Activated CD4-positive, alpha-beta T cell treated with anti-CD3 and anti-CD28 coated beads for 36 hours (primary cell): ENCODE measurements at regions of chr2 and their contacts with region 1.

Region 1: GRCh38 chr2:207529330-207530159 is at the start of gene CREB1:
- DNase-seq: peak; percentile 100
- ATAC-seq: peak; percentile 89
- H3K4me3 Mint-ChIP-seq: peak within 1 kb of the TSS; percentile 98
- H3K27ac Mint-ChIP-seq: peak within 1 kb of the TSS; percentile 100
- H3K4me1 Mint-ChIP-seq: peaks cover 57% of the 10 kb centered on the region
- H3K27me3 Mint-ChIP-seq: no peaks in the 10 kb centered on the region
- total RNA-seq, gene CREB1: 85.4 to 136 TPM

Region 2: DNA sequence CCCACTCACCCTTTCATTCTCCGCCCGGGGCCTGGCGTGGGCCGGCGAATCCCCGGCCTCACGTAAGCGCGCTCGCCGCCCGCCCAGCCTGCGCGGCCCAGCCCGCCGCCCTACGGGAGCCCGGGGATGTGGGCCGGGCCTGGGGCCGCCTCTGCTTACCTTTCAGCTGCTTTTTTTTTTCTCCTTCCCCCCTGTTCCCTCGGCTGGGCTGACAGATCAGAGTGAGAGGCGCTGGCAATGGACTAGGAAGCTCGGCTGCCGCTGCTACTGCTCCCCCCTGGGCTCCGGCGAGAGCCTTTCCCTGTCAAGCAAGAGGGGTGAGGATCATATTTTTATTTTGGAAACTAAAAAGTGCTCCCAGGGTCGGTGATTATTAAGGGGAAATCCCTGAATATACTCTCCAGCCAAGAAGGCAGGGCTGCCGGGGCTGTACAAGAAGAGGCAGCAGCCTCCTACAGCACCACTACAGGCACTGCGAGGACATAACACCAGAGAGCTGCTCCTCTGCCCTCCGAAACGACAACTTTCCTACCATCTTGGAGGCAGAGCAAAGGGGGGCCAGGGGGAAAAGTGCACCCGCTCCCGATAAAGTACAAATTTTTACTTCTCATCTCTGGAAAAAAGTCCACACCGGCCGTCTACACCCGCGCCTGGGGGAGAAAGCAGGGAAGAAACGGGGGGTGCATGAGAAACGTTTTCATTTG is 1443.7 kb before region 1 on chr2 and contains the start of gene INO80D:
- CTCF ChIA-PET with region 1: no interaction called
- POLR2A ChIA-PET with region 1: no interaction called
- intact Hi-C with region 1: loop called in 1 of 2 experiments (anchors 5 kb)
- DNase-seq: peak; percentile 89
- ATAC-seq: peak; percentile 96
- H3K4me3 Mint-ChIP-seq: peak within 1 kb of the TSS; percentile 96
- H3K27ac Mint-ChIP-seq: peak within 1 kb of the TSS; percentile 99
- H3K4me1 Mint-ChIP-seq: peaks cover 28% of the 10 kb centered on the region
- H3K27me3 Mint-ChIP-seq: no peaks in the 10 kb centered on the region
- total RNA-seq, gene INO80D: 17.6 to 18.9 TPM

Region 3: DNA sequence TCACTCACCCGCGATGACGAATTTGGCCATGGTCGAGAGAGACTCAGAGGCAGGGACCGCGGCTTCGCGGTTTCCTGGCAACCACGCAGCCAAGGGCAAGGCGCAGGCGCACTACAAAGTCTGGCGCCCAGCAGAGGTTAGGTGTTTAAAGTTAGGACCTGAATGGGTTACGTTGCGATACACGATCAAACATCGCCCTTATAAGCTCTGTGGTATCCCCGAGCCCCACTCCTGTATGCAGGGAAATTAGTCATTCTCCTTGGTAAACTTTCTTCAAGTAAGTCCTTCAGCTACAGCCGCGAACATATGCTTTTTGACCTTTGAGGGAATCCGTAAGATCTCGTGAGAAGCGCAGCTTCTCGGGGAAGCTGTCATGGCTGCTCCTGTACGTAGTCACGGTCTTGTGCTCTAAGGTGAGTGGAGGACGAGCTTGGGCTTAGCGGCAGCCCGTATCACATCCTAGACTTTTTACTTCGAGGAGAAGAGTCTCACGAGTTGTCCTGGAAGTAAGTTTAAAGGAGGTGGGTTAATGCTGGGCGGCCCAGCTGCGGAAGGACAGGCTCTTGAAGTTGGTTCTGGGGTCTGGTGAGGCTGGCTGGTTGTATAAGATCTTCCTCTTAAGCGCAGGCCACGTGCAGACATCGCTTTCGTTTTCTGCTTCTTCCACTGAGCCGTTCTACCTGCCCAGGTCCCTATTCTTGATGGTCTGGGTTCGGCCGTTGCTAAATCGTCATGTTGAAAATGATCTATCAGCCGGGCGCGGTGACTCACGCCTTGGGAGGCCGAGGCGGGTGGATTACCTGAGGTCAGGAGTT is 764.1 kb before region 1 on chr2 and contains the starts of genes FASTKD2 and MDH1B:
- CTCF ChIA-PET with region 1: no interaction called
- POLR2A ChIA-PET with region 1: interaction called, 3 read pairs
- intact Hi-C with region 1: loop called in 1 of 2 experiments (anchors 1 kb)
- DNase-seq: peak; percentile 93
- ATAC-seq: peak; percentile 87
- H3K4me3 Mint-ChIP-seq: peak within 1 kb of the TSS; percentile 93
- H3K27ac Mint-ChIP-seq: peak within 1 kb of the TSS; percentile 98
- H3K4me1 Mint-ChIP-seq: peaks cover 37% of the 10 kb centered on the region
- H3K27me3 Mint-ChIP-seq: no peaks in the 10 kb centered on the region
- total RNA-seq, gene FASTKD2: 33.9 to 37.0 TPM
- total RNA-seq, gene MDH1B: 0.83 to 1.3 TPM

Region 4: DNA sequence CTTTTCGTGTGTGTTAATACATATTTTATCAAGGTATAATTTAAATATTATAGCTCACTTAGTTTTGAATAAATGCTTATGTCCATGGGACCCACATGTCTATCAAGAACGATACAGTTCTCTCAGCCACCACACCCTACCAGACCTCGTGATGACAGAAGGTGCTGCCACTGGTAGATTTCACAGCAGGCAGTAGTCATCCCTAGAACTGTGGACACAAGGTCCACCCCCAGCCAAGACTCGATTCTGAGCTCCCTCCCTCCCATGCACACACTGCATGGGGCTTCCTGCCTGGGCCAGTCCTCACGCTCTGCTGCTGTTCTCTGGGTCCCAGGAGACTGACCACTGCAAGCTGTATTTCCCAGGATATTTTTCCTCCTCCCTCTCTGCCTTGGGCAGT is 26.3 kb before region 1 on chr2:
- CTCF ChIA-PET with region 1: interaction called, 5 read pairs
- POLR2A ChIA-PET with region 1: interaction called, 27 read pairs
- intact Hi-C with region 1: loop called (anchors 1 kb)
- DNase-seq: peak; percentile 28
- ATAC-seq: no peak
- H3K4me3 Mint-ChIP-seq: no peak overlapping the region
- H3K27ac Mint-ChIP-seq: no peak overlapping the region
- H3K4me1 Mint-ChIP-seq: peaks cover 57% of the 10 kb centered on the region
- H3K27me3 Mint-ChIP-seq: no peaks in the 10 kb centered on the region

Region 5: GRCh38 chr2:207710814-207711740 is 181.5 kb after region 1 on chr2 and contains the start of gene CCNYL1:
- CTCF ChIA-PET with region 1: interaction called, 4 read pairs
- POLR2A ChIA-PET with region 1: interaction called, 3 read pairs
- intact Hi-C with region 1: loop called in 1 of 2 experiments (anchors 1 kb)
- DNase-seq: peak; percentile 99
- ATAC-seq: peak; percentile 99
- H3K4me3 Mint-ChIP-seq: peak within 1 kb of the TSS; percentile 83
- H3K27ac Mint-ChIP-seq: peak within 1 kb of the TSS; percentile 88
- H3K4me1 Mint-ChIP-seq: peaks cover 25% of the 10 kb centered on the region
- H3K27me3 Mint-ChIP-seq: no peaks in the 10 kb centered on the region
- total RNA-seq, gene CCNYL1: 4.0 to 5.5 TPM

Region 6: GRCh38 chr2:208025037-208025813 is 495.7 kb after region 1 on chr2 and contains the start of gene PLEKHM3:
- CTCF ChIA-PET with region 1: no interaction called
- POLR2A ChIA-PET with region 1: no interaction called
- intact Hi-C with region 1: loop called (anchors 5 to 10 kb)
- DNase-seq: peak; percentile 88
- ATAC-seq: peak; percentile 83
- H3K4me3 Mint-ChIP-seq: peak within 1 kb of the TSS; percentile 77
- H3K27ac Mint-ChIP-seq: peak within 1 kb of the TSS; percentile 94
- H3K4me1 Mint-ChIP-seq: peaks cover 12% of the 10 kb centered on the region
- H3K27me3 Mint-ChIP-seq: no peaks in the 10 kb centered on the region
- total RNA-seq, gene PLEKHM3: 4.5 to 5.2 TPM